Testis (tissue), 5 donors: ENCODE measurements at regions of chr15 and their contacts with region 1.

Region 1: DNA sequence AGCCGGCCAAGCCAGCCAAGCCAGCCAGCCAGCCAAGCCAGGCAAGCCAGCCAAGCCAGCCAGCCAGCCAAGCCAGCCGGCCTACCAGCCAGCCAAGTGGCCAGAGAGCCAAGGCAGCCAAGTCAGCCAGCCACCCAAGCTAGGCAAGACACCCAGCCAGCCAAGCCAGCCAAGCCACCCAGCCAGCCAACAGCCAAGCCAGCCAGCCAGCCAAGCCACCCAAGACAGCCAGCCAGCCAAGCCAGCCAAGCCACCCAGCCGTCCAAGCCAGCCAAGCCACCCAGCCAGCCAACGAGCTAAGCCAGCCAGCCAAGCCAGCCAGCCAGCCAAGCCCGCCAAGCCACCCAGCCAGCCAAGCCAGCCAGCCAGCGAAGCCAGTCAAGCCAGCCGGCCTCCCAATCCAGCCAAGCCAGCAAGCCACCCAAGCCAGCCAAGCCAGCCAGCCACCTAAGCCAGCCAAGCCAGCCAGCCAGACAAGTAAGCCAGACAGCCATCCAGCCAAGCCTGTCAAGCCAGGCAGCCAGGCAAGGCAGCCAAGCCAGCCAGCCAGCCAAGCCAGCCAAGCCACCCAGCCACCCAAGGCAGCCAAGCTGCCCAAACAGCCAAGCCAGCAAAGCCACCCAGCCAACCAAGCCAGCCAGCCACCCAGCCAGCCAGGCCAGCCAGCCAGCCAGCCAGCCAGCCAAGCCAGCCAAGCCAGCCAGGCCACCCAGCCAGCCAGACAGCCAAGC is 200.5 kb downstream of the GOLGA6L6 start:
- DNase-seq: peak; percentile 45
- H3K4me3 ChIP-seq: no peak overlapping the region
- H3K27ac ChIP-seq: no peak overlapping the region
- H3K4me1 ChIP-seq: no peaks in the 10 kb centered on the region
- H3K27me3 ChIP-seq: no peaks in the 10 kb centered on the region
- CTCF ChIP-seq: no peak
- POLR2A ChIP-seq: no peak

Region 2: GRCh38 chr15:19956124-19956796 is 384.8 kb before region 1 on chr15:
- intact Hi-C with region 1: no loop called
- DNase-seq: no peak
- H3K4me3 ChIP-seq: no peak overlapping the region
- H3K27ac ChIP-seq: no peak overlapping the region
- H3K4me1 ChIP-seq: no peaks in the 10 kb centered on the region
- H3K27me3 ChIP-seq: no peaks in the 10 kb centered on the region
- CTCF ChIP-seq: no peak
- POLR2A ChIP-seq: no peak

Region 3: DNA sequence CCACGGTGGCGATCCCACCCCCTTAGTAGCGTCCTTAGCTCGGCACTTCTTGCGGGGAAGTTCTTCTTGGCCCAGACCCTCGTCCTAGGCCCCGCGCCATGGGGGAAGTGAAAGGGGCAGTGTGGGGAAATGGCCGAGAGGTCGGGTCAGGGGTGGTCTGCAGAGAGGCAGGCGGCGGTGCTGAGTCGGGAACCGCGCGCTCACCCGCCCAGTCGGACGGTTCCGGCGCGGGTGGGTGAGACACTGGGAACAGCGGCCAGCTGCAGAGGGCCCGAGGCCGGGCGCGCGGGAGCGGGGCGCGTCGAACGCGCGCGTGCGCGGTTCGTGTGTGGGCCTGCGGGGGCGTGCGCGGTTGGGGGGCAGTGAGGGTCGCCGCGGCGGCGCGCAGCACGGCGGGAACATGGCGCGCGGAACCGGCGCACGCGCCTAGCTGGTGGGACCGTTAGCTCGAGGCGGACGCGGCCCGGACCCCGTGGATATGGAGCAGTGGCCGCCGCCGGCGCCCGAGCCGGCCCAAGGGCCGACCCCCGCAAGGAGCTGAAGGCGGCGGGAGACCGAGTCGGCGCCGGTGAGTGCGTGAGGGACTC is 46.4 kb before region 1 on chr15:
- intact Hi-C with region 1: no loop called
- DNase-seq: peak; percentile 82
- H3K4me3 ChIP-seq: peak overlapping the region; percentile 53 to 56
- H3K27ac ChIP-seq: peak overlapping the region in 1 of 2 donors; percentile 71
- H3K4me1 ChIP-seq: no peaks in the 10 kb centered on the region
- H3K27me3 ChIP-seq: no peaks in the 10 kb centered on the region
- CTCF ChIP-seq: no peak
- POLR2A ChIP-seq: no peak

Region 4: DNA sequence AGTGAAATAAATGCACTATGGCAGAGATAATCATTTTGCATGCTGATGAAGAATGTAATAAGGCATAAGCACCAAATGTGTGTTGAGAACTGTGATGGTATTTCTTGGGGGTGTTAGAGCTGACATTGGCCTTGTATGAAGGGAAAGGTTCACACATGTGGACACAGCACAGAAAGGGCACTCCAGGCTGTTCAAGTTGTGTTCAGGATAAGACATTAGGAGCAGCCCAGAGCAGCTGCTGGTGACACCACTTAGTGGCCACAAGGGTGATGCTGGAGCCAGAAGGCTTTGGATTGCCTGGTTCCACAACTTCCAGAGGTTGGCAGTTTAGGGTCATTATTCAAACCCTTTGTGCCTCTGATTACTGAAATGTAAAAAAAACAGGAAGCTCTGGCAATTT is 45.1 kb after region 1 on chr15:
- intact Hi-C with region 1: loop called (anchors 10 kb)
- DNase-seq: no peak
- H3K4me3 ChIP-seq: no peak overlapping the region
- H3K27ac ChIP-seq: no peak overlapping the region
- H3K4me1 ChIP-seq: no peaks in the 10 kb centered on the region
- H3K27me3 ChIP-seq: no peaks in the 10 kb centered on the region
- CTCF ChIP-seq: no peak
- POLR2A ChIP-seq: no peak